PC-3 (cell line): ENCODE measurements at regions of chr12 and their contacts with region 1.

Region 1: DNA sequence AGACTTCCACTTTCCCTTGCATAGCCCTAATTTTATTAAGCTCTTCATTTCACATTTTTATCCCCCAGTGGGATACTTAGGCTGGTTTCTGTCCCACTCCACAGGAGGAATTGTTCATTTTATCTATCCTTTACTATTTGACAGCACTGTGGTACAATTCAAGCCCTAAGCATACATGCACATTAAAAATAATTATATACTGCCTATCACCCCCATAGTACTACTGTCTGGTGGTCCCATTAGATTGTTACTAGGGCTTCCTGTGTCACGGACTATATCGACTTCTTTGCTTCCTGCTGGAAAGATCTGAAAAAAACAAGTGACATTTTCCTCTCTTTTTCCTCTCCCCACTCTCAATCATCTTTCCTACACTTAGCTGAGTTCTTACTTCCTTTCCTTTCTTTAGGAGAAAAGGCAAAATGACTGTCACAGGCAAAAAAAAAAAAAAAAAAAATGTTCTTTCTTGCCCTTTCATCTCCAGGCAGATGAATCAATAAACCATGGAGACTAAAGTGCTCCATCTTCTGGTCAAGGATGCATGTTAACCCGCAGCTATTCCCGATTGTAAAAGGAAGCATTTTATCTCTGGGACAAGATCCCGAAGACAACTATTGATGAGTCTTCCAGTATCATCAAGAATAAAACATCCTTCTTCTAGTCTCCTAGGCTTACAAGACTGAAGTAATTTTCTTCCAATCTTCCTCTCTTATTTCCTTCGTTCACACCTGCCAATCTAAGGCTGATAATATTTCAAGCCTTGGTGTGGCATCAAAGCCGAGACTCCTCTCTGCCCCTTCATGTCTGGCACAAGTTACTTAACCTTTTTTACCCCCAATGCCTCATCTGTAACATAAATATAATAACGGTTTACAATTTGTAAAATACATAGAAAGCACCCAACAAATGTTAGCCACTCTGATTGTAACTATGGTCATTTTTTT is 94.4 kb upstream of the PLEKHG7 start:
- DNase-seq: peak; percentile 73
- ATAC-seq: peak; percentile 54
- H3K4me3 ChIP-seq: no peak overlapping the region
- H3K27ac ChIP-seq: no peak overlapping the region
- H3K4me1 ChIP-seq: peaks cover 9% of the 10 kb centered on the region; the same call in 1 of the 2 replicates
- H3K27me3 ChIP-seq: no peaks in the 10 kb centered on the region
- CTCF ChIP-seq: peak; percentile 85

Region 2: DNA sequence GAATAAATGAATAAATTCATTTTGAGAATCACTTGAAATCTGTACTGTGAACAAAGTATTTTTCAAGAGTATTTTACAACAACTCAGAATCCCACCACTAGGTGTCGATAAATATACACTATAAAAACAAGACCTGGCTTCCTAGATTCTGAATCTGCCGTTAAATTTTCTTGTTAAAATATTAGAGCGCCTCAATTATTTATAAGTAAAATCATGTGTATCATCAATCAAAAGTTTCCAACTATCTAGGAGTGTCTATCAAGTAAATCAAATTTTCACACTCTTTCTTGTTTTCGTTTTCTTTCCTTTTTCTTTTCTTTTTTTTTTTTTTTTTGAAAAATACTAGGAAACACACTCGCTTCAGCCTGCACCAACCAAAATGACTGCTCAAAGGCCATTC is 1246.6 kb before region 1 on chr12:
- CTCF ChIA-PET with region 1: no interaction called
- POLR2A ChIA-PET with region 1: no interaction called
- intact Hi-C with region 1: loop called (anchors 10 kb)
- DNase-seq: peak; percentile 73
- ATAC-seq: no peak
- H3K4me3 ChIP-seq: no peak overlapping the region
- H3K27ac ChIP-seq: no peak overlapping the region
- H3K4me1 ChIP-seq: no peaks in the 10 kb centered on the region
- H3K27me3 ChIP-seq: no peaks in the 10 kb centered on the region
- CTCF ChIP-seq: peak; percentile 73

Region 3: DNA sequence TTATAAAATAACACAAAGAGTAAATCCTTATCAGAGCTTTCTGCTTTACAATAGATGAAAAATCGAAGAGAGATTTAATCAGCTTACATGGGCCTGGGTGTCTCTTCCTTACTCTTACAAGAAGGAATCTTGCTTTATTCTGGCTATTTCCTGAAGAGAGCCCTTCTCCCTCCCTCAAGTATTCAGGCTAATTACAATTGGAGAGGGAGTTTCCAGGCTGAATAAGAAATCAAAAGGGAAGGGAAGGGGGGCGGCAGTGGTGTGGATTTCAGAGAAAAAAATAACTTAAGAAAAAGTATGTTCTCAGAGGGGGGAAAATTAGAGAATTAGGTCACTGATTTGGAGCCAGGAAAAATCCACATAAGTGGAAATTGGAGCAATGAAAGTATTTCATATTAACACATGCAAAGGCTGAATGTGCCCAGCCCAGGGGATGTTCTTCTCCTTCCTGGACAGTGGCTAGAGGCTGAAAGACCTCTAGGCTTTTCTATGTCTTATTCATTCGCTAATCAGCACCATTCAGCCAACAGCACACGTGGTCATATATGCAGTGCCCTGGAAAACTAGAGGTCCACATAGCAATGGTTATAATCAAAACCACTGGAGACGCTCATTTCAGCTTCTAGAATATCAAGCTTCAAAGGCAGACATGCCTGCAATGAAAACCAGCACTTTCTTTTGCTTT is 303.9 kb before region 1 on chr12:
- CTCF ChIA-PET with region 1: no interaction called
- POLR2A ChIA-PET with region 1: no interaction called
- intact Hi-C with region 1: no loop called
- DNase-seq: no peak
- ATAC-seq: no peak
- H3K4me3 ChIP-seq: no peak overlapping the region
- H3K27ac ChIP-seq: no peak overlapping the region
- H3K4me1 ChIP-seq: 0 out of 2 replicates have a peak, but pooled peaks cover 4% of the 10 kb centered on the region
- H3K27me3 ChIP-seq: no peaks in the 10 kb centered on the region
- CTCF ChIP-seq: no peak

Region 4: GRCh38 chr12:92324849-92325500 is 283.4 kb before region 1 on chr12:
- CTCF ChIA-PET with region 1: interaction called, 14 read pairs
- POLR2A ChIA-PET with region 1: no interaction called
- intact Hi-C with region 1: no loop called
- DNase-seq: no peak
- ATAC-seq: no peak
- H3K4me3 ChIP-seq: no peak overlapping the region
- H3K27ac ChIP-seq: no peak overlapping the region
- H3K4me1 ChIP-seq: no peaks in the 10 kb centered on the region
- H3K27me3 ChIP-seq: no peaks in the 10 kb centered on the region
- CTCF ChIP-seq: no peak

Region 5: GRCh38 chr12:92623386-92623785 is 15.0 kb after region 1 on chr12:
- CTCF ChIA-PET with region 1: interaction called, 10 read pairs
- POLR2A ChIA-PET with region 1: no interaction called
- intact Hi-C with region 1: no loop called
- DNase-seq: no peak
- ATAC-seq: no peak
- H3K4me3 ChIP-seq: no peak overlapping the region
- H3K27ac ChIP-seq: no peak overlapping the region
- H3K4me1 ChIP-seq: peaks cover 51% of the 10 kb centered on the region
- H3K27me3 ChIP-seq: no peaks in the 10 kb centered on the region
- CTCF ChIP-seq: no peak

Region 6: GRCh38 chr12:92649511-92650227 is 41.2 kb after region 1 on chr12:
- CTCF ChIA-PET with region 1: no interaction called
- POLR2A ChIA-PET with region 1: no interaction called
- intact Hi-C with region 1: loop called (anchors 1 kb)
- DNase-seq: peak; percentile 85
- ATAC-seq: peak; percentile 98
- H3K4me3 ChIP-seq: no peak overlapping the region
- H3K27ac ChIP-seq: no peak overlapping the region
- H3K4me1 ChIP-seq: peaks cover 27% of the 10 kb centered on the region
- H3K27me3 ChIP-seq: no peaks in the 10 kb centered on the region
- CTCF ChIP-seq: peak; percentile 91

Region 7: DNA sequence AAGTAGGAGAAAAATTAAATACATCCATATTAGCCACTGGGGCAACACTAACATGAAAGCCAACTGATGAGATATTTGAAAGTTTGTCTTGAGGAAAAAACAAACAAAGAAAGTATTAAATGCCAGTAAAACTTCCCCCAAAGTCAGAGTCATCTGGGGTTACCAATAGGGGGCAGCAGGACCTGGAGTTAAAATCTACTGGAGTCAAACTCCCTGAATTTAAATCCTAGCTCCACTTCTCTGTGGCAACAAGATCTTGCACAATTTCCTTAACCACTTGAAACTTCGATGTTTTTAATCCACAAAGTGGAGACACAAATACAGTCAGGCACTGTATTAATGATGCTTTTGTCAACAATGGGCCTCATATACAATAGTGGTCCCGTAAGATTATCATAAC is 108.8 kb after region 1 on chr12:
- CTCF ChIA-PET with region 1: no interaction called
- POLR2A ChIA-PET with region 1: no interaction called
- intact Hi-C with region 1: no loop called
- DNase-seq: peak; percentile 34
- ATAC-seq: no peak
- H3K4me3 ChIP-seq: no peak overlapping the region
- H3K27ac ChIP-seq: no peak overlapping the region
- H3K4me1 ChIP-seq: peaks cover 8% of the 10 kb centered on the region; the same call in 1 of the 2 replicates
- H3K27me3 ChIP-seq: no peaks in the 10 kb centered on the region
- CTCF ChIP-seq: peak; percentile 57